Posterior cingulate gyrus (tissue), 11 donors: ENCODE measurements at regions of chr5 and their contacts with region 1.

Region 1: GRCh38 chr5:150129813-150130492 is 25.7 kb downstream of the PDGFRB start:
- DNase-seq: peak; percentile 59 to 96 (median 72)

Region 2: GRCh38 chr5:150081541-150082283 is 48.2 kb before region 1 on chr5:
- intact Hi-C with region 1: no loop called
- DNase-seq: peak in 4 of 10 donors; percentile 32 to 90 (median 36)

Region 3: DNA sequence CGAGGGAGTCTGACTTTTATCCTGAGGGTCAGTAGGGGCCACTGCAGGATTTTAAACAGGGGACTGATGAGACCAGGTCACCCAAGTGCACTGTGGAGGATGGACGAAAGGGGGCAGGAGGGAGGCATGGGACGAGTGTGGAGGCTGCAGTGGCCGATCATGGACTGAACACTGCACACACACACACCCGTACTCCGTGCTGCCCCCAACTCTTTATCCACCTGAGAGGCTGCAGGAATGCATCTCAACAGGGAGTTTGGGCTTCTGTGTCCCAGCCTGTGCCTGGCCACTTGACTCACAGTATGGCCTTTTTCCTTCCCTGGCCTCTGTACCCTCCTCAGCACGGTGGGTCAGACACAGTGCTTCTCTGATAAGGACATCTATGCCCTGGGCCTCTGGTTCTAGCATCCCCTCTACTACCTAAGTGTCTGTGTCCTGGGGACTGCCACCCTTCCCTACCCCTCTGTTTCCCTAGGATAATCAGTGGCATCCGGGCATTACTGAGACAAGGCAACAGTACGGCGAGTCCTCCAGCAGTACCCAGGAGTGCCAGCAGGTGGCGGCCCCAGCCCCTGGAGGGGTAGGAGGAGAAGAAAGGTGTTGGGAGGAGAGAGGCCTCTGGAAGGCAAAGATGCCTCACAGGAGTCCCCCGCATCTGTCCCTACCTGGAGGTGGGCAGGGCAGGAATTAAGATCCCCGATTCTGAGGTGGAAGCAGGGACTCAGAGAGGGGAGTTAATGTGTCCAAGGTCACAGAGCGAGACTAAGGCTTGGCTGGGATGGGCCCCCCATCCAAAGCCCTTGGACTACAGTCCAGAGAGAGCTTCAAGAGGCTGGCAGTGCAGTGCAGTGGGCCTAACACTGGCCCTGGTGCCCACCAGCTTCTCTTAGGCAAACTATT is 31.5 kb after region 1 on chr5:
- intact Hi-C with region 1: loop called (anchors 2 kb)
- DNase-seq: peak; percentile 68 to 97 (median 86)

Region 4: GRCh38 chr5:150217873-150218692 is 88.1 kb after region 1 on chr5:
- intact Hi-C with region 1: loop called (anchors 1 kb)
- DNase-seq: peak; percentile 73 to 98 (median 89)